Activated CD4-positive, alpha-beta T cell treated with anti-CD3 and anti-CD28 coated beads for 36 hours (primary cell): ENCODE measurements at regions of chr1 and their contacts with region 1.

Region 1: DNA sequence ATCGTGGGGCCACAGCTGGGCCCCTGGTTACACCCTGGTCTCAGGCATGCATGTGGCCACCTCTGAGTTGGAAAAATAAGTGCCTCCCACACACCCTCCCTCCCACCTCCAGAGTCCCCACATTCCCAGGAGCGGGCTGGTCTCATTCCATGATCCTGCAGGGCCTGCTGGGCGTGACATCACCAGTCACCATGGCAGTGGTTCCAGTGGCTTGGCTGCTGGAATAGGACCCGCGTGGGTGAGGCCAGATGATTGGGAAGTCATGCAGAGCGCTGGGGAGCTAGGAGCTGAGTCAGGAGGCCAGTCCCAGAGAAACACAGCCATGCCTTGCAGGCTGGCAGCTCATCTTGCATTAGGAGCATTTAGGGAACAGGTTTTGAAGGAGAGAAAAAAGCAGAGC is 125.4 kb upstream of the TMEM51 start:
- DNase-seq: no peak
- ATAC-seq: no peak
- H3K4me3 Mint-ChIP-seq: no peak overlapping the region
- H3K27ac Mint-ChIP-seq: no peak overlapping the region
- H3K4me1 Mint-ChIP-seq: no peaks in the 10 kb centered on the region
- H3K27me3 Mint-ChIP-seq: no peaks in the 10 kb centered on the region

Region 2: GRCh38 chr1:14094611-14095400 is 933.3 kb before region 1 on chr1:
- CTCF ChIA-PET with region 1: no interaction called
- POLR2A ChIA-PET with region 1: no interaction called
- intact Hi-C with region 1: loop called in 1 of 2 experiments (anchors 10 kb)
- DNase-seq: no peak
- ATAC-seq: no peak
- H3K4me3 Mint-ChIP-seq: no peak overlapping the region
- H3K27ac Mint-ChIP-seq: no peak overlapping the region
- H3K4me1 Mint-ChIP-seq: no peaks in the 10 kb centered on the region
- H3K27me3 Mint-ChIP-seq: peaks cover 19% of the 10 kb centered on the region

Region 3: GRCh38 chr1:14778898-14779865 is 248.9 kb before region 1 on chr1:
- CTCF ChIA-PET with region 1: interaction called, 5 read pairs
- POLR2A ChIA-PET with region 1: no interaction called
- intact Hi-C with region 1: loop called in 1 of 2 experiments (anchors 1 kb)
- DNase-seq: peak; percentile 62
- ATAC-seq: peak; percentile 16
- H3K4me3 Mint-ChIP-seq: no peak overlapping the region
- H3K27ac Mint-ChIP-seq: no peak overlapping the region
- H3K4me1 Mint-ChIP-seq: no peaks in the 10 kb centered on the region
- H3K27me3 Mint-ChIP-seq: peaks cover 3% of the 10 kb centered on the region

Region 4: GRCh38 chr1:14915356-14916054 is 112.6 kb before region 1 on chr1:
- CTCF ChIA-PET with region 1: interaction called, 3 read pairs
- POLR2A ChIA-PET with region 1: no interaction called
- intact Hi-C with region 1: loop called in 1 of 2 experiments (anchors 2 kb)
- DNase-seq: peak; percentile 69
- ATAC-seq: peak; percentile 78
- H3K4me3 Mint-ChIP-seq: no peak overlapping the region
- H3K27ac Mint-ChIP-seq: no peak overlapping the region
- H3K4me1 Mint-ChIP-seq: no peaks in the 10 kb centered on the region
- H3K27me3 Mint-ChIP-seq: peaks cover 3% of the 10 kb centered on the region

Region 5: DNA sequence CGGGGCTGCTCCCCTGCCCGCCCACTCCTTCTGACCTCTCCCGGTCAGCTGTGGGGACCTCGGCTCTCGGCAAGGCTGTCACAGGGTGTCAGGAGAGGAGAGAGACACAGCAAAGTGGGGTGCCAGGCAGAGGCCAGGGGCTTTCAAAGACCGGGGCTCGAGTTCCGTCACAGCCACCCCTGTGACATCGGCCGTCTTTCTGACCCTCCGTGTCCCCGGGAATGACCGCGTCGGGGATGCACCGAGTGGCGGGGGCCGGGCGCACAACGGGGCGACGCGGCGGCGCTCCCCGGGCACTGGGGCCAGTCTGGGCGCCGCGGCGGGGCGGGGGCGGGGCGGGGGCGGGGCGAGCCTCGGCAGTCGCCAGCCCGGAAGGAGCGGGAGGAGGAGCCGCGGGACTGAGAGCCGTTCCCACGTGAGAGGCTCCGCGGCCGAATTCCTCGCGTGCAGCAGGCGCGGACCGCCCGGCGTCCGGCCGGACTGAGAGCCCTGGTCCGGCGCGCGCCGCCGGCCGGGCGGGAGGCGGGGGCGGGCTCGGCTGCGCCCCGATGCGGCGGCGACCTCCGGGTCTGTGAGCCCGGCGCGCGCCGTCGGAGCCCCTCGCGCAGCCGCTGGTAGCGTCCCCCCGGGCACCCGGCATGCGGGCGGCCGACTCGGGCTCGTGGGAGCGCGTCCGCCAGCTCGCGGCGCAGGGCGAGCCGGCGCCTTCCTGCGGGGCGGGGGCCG is 104.2 kb before region 1 on chr1:
- CTCF ChIA-PET with region 1: no interaction called
- POLR2A ChIA-PET with region 1: no interaction called
- intact Hi-C with region 1: loop called in 1 of 2 experiments (anchors 2 kb)
- DNase-seq: peak; percentile 58
- ATAC-seq: peak; percentile 79
- H3K4me3 Mint-ChIP-seq: peak overlapping the region; percentile 60
- H3K27ac Mint-ChIP-seq: no peak overlapping the region
- H3K4me1 Mint-ChIP-seq: peaks cover 2% of the 10 kb centered on the region
- H3K27me3 Mint-ChIP-seq: peaks cover 34% of the 10 kb centered on the region

Region 6: DNA sequence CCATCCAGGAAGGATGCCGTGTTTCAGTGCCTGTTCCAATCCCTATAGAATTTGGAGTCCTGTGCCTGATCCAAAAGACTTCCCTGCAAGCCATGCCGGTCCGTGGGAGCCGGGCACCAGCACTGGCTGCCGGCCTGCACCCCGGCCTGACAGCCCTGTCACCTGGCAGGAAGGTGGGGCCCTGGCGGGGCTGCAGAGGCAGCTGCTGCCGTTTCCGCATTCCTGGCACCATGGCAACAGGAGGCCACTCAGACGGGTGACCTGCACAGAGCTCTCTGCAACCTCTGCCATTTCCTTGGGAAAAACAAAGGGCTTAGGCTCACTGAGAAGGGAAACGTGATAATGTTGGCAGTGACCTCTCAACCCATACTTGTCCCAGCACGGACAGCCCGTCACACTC is 62.3 kb after region 1 on chr1:
- CTCF ChIA-PET with region 1: no interaction called
- POLR2A ChIA-PET with region 1: no interaction called
- intact Hi-C with region 1: no loop called
- DNase-seq: peak; percentile 55
- ATAC-seq: peak; percentile 80
- H3K4me3 Mint-ChIP-seq: no peak overlapping the region
- H3K27ac Mint-ChIP-seq: no peak overlapping the region
- H3K4me1 Mint-ChIP-seq: peaks cover 5% of the 10 kb centered on the region
- H3K27me3 Mint-ChIP-seq: no peaks in the 10 kb centered on the region